HCT116 (cell line): ENCODE measurements at regions of chr17 and their contacts with region 1.

Region 1: DNA sequence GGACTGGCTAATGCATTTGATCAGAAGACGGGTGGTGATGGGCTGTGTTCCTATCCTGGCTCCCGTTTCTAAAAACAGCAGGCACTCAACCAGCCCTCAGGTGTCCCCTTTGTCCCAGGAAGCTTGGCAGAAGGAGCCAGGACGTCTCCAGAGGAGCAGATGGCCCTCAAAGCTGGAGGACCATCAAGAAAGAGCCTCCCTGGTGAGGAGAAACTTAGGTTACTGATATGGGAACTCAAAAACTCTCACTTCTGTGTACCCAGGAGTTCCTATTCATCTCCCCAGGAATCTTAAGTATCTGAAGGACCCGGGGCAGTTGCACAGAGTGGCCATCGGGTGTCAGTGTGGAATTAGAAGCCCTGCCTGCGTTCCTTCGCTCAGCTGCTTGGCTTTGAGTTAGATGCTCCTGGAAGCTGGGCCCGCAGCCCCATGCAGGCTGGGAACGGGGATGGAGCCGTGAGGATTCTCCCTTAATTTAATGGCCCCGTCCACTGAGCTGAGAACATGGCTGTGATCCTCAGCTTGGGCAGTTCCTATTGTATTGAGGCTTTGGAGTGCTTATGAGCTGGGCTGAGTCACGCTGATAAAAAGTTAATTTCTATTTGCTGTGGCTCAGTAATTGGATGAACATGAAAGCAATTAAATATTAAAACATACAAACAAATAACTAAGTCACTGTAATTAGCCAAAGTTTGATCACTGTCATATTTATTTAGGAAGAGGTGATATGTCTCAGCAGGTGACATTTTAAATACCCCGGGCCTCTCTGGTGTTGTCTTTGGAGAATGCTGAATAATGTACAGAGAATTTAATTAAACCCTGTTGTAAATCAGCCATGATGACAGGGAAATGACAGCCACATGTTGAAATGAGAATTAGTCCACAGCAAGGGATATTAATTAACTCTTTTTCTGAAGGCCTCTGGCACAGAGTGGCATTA is 402.1 kb downstream of the SEC14L1 start:
- DNase-seq: peak; percentile 79
- ATAC-seq: peak; percentile 98
- H3K4me3 ChIP-seq: no peak overlapping the region
- H3K27ac ChIP-seq: no peak overlapping the region
- H3K4me1 ChIP-seq: peaks cover 0 to 8% of the 10 kb centered on the region in 2 experiments; a peak in 3 of 4 replicates
- H3K27me3 ChIP-seq: peaks cover 22% of the 10 kb centered on the region; the same call in 1 of the 2 replicates
- CTCF ChIP-seq: peak; percentile 92 to 99 (median 99)
- POLR2A ChIP-seq: no peak
- RAD21 ChIP-seq: peak; percentile 98

Region 2: DNA sequence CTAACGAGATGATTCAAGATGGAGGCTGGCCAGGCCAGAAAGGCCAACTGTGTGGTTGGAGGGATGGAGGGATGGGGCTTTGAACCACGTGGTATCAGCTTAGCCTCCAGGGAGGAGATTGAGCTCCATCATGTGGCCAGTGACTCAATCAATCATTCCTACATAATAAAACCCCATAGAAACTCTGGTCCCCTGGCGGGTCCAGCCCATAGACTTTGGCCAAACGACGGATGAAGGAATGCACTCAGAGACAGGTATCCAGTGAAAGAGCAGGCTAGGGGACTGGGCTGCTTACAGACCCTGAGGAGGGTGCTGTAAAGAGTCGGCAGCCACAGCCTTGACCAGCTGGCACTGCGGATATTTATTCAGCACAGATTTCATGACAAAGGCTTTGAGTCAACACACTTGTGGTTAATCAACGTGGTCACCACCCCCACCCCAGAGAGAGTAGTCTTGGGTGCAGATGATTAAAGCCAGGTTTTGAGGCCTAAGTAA is 106.9 kb after region 1 on chr17:
- CTCF ChIA-PET with region 1: interaction called, 13 read pairs
- POLR2A ChIA-PET with region 1: no interaction called
- RAD21 ChIA-PET with region 1: interaction called in 1 of 2 experiments, 5 read pairs
- intact Hi-C with region 1: loop called (anchors 2 kb)
- DNase-seq: peak; percentile 42
- ATAC-seq: peak; percentile 91
- H3K4me3 ChIP-seq: no peak overlapping the region
- H3K27ac ChIP-seq: no peak overlapping the region
- H3K4me1 ChIP-seq: no peaks in the 10 kb centered on the region
- H3K27me3 ChIP-seq: peaks cover 11% of the 10 kb centered on the region; the same call in 1 of the 2 replicates
- CTCF ChIP-seq: peak in 2 of 3 experiments; percentile 29 to 30; a peak in 2 of 6 replicates
- POLR2A ChIP-seq: no peak
- RAD21 ChIP-seq: peak; percentile 76

Region 3: DNA sequence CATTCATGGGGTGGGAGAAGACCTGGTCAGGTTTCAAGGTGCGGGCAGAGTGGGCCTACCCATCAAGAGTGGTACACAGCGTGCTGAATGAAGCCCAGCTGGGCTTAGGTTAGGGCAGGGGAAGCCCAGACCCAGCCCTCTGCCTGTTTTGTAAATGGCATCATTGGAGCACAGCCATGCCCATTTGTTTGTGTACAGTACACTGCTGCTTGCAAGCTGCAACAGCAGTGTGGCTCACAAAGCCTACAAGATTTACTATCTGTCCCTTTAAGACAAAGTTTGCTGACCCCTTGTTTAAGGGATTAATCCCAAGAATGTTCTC is 185.6 kb after region 1 on chr17:
- CTCF ChIA-PET with region 1: no interaction called
- POLR2A ChIA-PET with region 1: no interaction called
- RAD21 ChIA-PET with region 1: no interaction called
- intact Hi-C with region 1: loop called (anchors 2 kb)
- DNase-seq: no peak
- ATAC-seq: no peak
- H3K4me3 ChIP-seq: no peak overlapping the region
- H3K27ac ChIP-seq: no peak overlapping the region
- H3K4me1 ChIP-seq: no peaks in the 10 kb centered on the region
- H3K27me3 ChIP-seq: peaks cover 5% of the 10 kb centered on the region; the same call in 1 of the 2 replicates
- CTCF ChIP-seq: no peak
- POLR2A ChIP-seq: no peak
- RAD21 ChIP-seq: no peak

Region 4: DNA sequence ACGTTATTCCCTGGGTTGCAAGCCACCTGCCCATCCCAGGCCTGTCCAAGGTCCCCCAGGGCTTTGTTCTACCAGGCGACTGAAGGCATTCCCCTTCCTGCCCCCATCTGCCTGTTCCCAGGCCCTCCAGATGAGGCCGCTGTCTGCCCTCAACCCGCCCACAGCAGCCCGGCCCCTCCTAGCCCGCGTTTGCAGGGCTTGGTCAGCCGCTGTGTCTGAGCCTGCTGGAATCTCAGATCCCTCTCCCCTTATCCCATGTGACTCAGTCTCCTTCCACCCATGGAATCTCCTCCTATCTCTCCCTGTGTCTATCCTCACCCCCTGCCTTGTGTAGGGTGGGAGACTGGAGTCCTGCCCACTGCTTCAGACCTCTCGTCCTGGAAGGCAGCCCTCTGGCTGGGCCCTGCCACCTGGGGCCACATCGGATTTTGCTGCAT is 229.7 kb after region 1 on chr17:
- CTCF ChIA-PET with region 1: interaction called, 4 read pairs
- POLR2A ChIA-PET with region 1: no interaction called
- RAD21 ChIA-PET with region 1: no interaction called
- intact Hi-C with region 1: loop called (anchors 2 kb)
- DNase-seq: peak; percentile 32
- ATAC-seq: peak; percentile 99
- H3K4me3 ChIP-seq: no peak overlapping the region
- H3K27ac ChIP-seq: no peak overlapping the region
- H3K4me1 ChIP-seq: peaks cover 0 to 19% of the 10 kb centered on the region in 2 experiments; a peak in 2 of 4 replicates
- H3K27me3 ChIP-seq: no peaks in the 10 kb centered on the region; the same call in 1 of the 2 replicates
- CTCF ChIP-seq: peak; percentile 87 to 99 (median 95); a peak in 5 of 6 replicates
- POLR2A ChIP-seq: no peak
- RAD21 ChIP-seq: peak; percentile 99

Region 5: GRCh38 chr17:78013683-78014467 is 471.1 kb after region 1 on chr17:
- CTCF ChIA-PET with region 1: interaction called, 38 read pairs
- POLR2A ChIA-PET with region 1: no interaction called
- RAD21 ChIA-PET with region 1: interaction called, 5 to 7 read pairs
- intact Hi-C with region 1: loop called (anchors 1 kb)
- DNase-seq: peak; percentile 54
- ATAC-seq: peak; percentile 92
- H3K4me3 ChIP-seq: no peak overlapping the region
- H3K27ac ChIP-seq: no peak overlapping the region
- H3K4me1 ChIP-seq: no peaks in the 10 kb centered on the region
- H3K27me3 ChIP-seq: no peaks in the 10 kb centered on the region
- CTCF ChIP-seq: peak; percentile 87 to 100 (median 93)
- POLR2A ChIP-seq: no peak
- RAD21 ChIP-seq: peak; percentile 98

Region 6: GRCh38 chr17:78019367-78019975 is 476.6 kb after region 1 on chr17:
- CTCF ChIA-PET with region 1: interaction called, 38 read pairs
- POLR2A ChIA-PET with region 1: no interaction called
- RAD21 ChIA-PET with region 1: interaction called in 1 of 2 experiments, 7 read pairs
- intact Hi-C with region 1: loop called (anchors 1 kb)
- DNase-seq: peak; percentile 33
- ATAC-seq: peak; percentile 71; the same call in 1 of the 2 replicates
- H3K4me3 ChIP-seq: no peak overlapping the region
- H3K27ac ChIP-seq: no peak overlapping the region
- H3K4me1 ChIP-seq: no peaks in the 10 kb centered on the region
- H3K27me3 ChIP-seq: no peaks in the 10 kb centered on the region
- CTCF ChIP-seq: peak; percentile 58 to 82 (median 65); a peak in 5 of 6 replicates
- POLR2A ChIP-seq: no peak
- RAD21 ChIP-seq: peak; percentile 83